Heart right ventricle (tissue), 16 donors: ENCODE measurements at regions of chr7 and their contacts with region 1.

Region 1: GRCh38 chr7:149147072-149147751 is at the start of gene ZNF398:
- DNase-seq: peak; percentile 63 to 79
- ATAC-seq: peak; percentile 86 to 97 (median 91)
- H3K4me3 ChIP-seq: peak within 1 kb of the TSS; percentile 82 to 97 (median 92)
- H3K27ac ChIP-seq: peak within 1 kb of the TSS; percentile 45 to 95 (median 90)
- H3K4me1 ChIP-seq: peaks cover 0 to 29% (median 18%) of the 10 kb centered on the region in 9 donors
- H3K27me3 ChIP-seq: no peaks in the 10 kb centered on the region
- CTCF ChIP-seq: peak; percentile 55 to 99 (median 81)
- total RNA-seq, gene ZNF398: 6.6 to 9.2 (median 7.8) TPM

Region 2: DNA sequence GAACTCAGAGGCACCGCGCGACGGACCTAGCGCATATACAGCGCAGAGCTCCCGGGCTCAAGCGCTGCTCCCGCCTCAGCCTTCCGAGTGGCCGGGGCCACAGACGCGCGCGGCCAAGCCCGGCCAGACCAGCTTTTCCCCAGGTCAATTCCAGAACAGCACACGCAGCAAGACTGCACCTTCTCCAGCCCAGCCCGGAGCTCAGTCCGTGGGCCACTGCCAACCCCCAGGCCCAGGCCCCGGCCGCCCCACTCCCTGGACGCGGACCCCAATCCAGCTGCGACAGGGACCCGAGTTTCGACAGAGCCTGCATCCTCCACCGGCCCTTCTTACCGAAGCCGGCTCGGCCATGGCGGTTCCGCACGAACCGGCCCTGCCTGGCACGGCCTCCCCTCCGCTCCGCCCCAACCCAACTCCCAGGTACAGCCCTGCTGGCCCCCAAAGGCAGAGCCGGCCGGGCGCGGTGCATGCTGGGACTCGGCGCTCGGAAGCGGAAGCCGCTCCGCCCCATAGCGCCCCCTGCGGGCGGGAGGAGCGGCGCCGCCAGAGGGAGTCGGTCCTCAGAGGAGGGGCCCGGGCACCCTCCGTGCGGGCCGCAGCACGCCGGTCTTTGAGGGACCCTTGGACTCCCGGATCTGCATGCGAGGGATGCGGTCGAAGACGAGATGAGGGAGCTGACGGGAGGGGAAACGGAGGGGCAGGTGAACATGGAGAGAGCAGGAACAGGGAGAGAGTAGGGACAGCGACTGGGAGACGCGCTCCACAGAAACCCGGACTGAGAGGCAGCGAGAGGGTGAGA is 21.1 kb before region 1 on chr7 and contains the start of gene ZNF425:
- intact Hi-C with region 1: loop called in 3 of 10 experiments (anchors 1 to 2 kb)
- DNase-seq: peak; percentile 90 to 95
- ATAC-seq: peak; percentile 93 to 98 (median 96)
- H3K4me3 ChIP-seq: peak within 1 kb of the TSS; percentile 76 to 100 (median 94)
- H3K27ac ChIP-seq: peak within 1 kb of the TSS; percentile 77 to 98 (median 95)
- H3K4me1 ChIP-seq: peaks cover 6 to 22% (median 18%) of the 10 kb centered on the region in 9 donors
- H3K27me3 ChIP-seq: no peaks in the 10 kb centered on the region
- CTCF ChIP-seq: peak; percentile 85 to 99 (median 96)
- total RNA-seq, gene ZNF425: 0.28 to 1.2 (median 0.78) TPM

Region 3: DNA sequence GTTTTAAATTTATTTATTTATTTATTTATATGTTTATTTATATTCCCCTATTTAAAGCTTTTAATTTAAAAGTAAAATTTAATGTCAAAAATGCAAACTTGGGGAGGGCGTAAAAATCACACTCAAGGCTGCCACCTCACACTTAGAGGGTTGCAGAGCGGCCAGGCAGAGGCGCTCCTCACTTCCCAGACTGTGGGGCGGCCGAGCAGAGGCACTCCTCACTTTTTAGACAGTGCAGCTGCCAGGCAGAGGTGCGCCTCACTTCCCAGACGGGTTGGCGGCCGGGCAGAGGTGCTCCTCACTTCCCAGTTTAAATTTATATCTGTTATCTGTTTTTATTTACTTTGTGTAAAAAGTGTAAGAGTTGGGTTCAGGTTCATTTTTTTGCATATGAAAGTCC is 11.1 kb before region 1 on chr7:
- intact Hi-C with region 1: no loop called
- DNase-seq: no peak
- ATAC-seq: no peak
- H3K4me3 ChIP-seq: no peak overlapping the region
- H3K27ac ChIP-seq: no peak overlapping the region
- H3K4me1 ChIP-seq: no peaks in the 10 kb centered on the region
- H3K27me3 ChIP-seq: no peaks in the 10 kb centered on the region
- CTCF ChIP-seq: no peak